ENCODE measurements at regions of chr1 and their contacts with region 1.

Region 1: GRCh38 chr1:246959944-246960693 is 28.4 kb upstream of the AHCTF1 start:
- DNase-seq: peak; percentile 88 to 95 (median 91)
- H3K4me3 ChIP-seq: peak overlapping the region in 5 of 7 experiments; percentile 17 to 55 (median 48)
- H3K27ac ChIP-seq: peak overlapping the region; percentile 37 to 80
- H3K4me1 ChIP-seq: peaks cover 14 to 32% (median 26%) of the 10 kb centered on the region in 4 experiments
- H3K27me3 ChIP-seq: no peaks in the 10 kb centered on the region

Region 2: GRCh38 chr1:246875041-246876026 is 84.8 kb before region 1 on chr1:
- CTCF ChIA-PET with region 1: no interaction called
- POLR2A ChIA-PET with region 1: no interaction called
- DNase-seq: peak in 1 of 3 donors; percentile 4
- H3K4me3 ChIP-seq: no peak overlapping the region
- H3K27ac ChIP-seq: no peak overlapping the region
- H3K4me1 ChIP-seq: no peaks in the 10 kb centered on the region
- H3K27me3 ChIP-seq: no peaks in the 10 kb centered on the region

Region 3: DNA sequence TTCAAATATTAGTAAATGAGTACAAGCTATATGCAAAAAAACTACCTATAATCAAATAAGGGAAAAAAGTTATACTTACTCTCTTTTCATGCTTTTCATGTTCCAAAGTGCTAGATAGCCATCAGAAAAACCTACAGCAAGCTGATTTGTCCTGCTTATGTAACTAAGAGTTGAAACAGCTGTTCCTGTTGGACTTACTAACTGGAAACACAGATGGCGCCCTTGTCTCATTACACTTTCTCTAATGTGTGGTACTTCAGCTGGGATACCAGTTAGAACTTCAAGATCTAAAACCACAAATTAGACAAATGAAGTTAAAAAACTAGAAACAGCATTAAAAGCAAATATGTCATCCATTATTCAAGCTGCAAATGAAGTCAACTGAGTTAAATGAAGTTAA is 52.6 kb before region 1 on chr1:
- CTCF ChIA-PET with region 1: interaction called, 12 read pairs
- POLR2A ChIA-PET with region 1: no interaction called
- DNase-seq: peak; percentile 71 to 89 (median 85)
- H3K4me3 ChIP-seq: no peak overlapping the region
- H3K27ac ChIP-seq: no peak overlapping the region
- H3K4me1 ChIP-seq: no peaks in the 10 kb centered on the region
- H3K27me3 ChIP-seq: no peaks in the 10 kb centered on the region

Region 4: GRCh38 chr1:246949956-246950355 is 10.2 kb before region 1 on chr1:
- CTCF ChIA-PET with region 1: interaction called, 11 read pairs
- POLR2A ChIA-PET with region 1: no interaction called
- DNase-seq: no peak
- H3K4me3 ChIP-seq: no peak overlapping the region
- H3K27ac ChIP-seq: no peak overlapping the region
- H3K4me1 ChIP-seq: peaks cover 0 to 3% (median 2%) of the 10 kb centered on the region in 4 experiments
- H3K27me3 ChIP-seq: no peaks in the 10 kb centered on the region

Region 5: GRCh38 chr1:246971090-246971721 is 11.1 kb after region 1 on chr1:
- CTCF ChIA-PET with region 1: interaction called, 19 read pairs
- POLR2A ChIA-PET with region 1: no interaction called
- DNase-seq: peak; percentile 29 to 56 (median 43)
- H3K4me3 ChIP-seq: no peak overlapping the region
- H3K27ac ChIP-seq: no peak overlapping the region
- H3K4me1 ChIP-seq: no peaks in the 10 kb centered on the region
- H3K27me3 ChIP-seq: no peaks in the 10 kb centered on the region

Region 6: GRCh38 chr1:247172996-247173395 is 212.9 kb after region 1 on chr1:
- CTCF ChIA-PET with region 1: no interaction called
- POLR2A ChIA-PET with region 1: no interaction called
- DNase-seq: peak; percentile 38 to 87 (median 86)
- H3K4me3 ChIP-seq: peak overlapping the region in 3 of 7 experiments; percentile 11 to 46 (median 22)
- H3K27ac ChIP-seq: no peak overlapping the region
- H3K4me1 ChIP-seq: peaks cover 15 to 16% (median 16%) of the 10 kb centered on the region in 4 experiments
- H3K27me3 ChIP-seq: no peaks in the 10 kb centered on the region